Activated CD8-positive, alpha-beta T cell treated with anti-CD3 and anti-CD28 coated beads for 36 hours (primary cell): ENCODE measurements at regions of chr9 and their contacts with region 1.

Region 1: DNA sequence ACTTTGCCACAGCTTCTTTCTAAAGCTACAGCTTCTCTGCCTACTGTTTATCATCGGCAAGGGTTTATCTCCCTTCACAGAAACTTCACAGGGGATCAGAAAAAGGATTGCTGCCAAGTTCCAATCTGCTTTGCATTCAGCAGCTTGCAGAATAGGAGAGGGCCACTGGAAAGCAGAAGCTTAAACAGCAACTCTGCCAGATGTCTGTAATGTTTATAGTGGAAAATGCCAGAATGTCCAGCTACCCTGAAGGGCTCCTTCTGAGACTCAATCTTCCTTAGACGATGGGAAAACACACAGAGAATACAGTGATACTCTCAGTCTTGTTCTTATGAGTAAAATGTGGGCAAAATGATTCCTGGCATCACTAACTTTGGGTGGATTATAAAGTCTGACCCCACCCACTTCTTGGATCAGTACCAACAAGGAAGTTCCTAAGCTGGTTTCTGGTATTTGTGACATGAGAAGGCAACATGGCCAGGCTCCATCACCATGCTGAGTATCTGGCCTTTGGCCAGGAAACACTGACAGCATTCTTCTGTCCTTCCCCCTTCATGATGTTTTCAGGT is 19.0 kb downstream of the STOM start:
- DNase-seq: no peak
- ATAC-seq: no peak
- H3K4me3 Mint-ChIP-seq: no peak overlapping the region
- H3K27ac Mint-ChIP-seq: no peak overlapping the region
- H3K4me1 Mint-ChIP-seq: peaks cover 38% of the 10 kb centered on the region
- H3K27me3 Mint-ChIP-seq: no peaks in the 10 kb centered on the region
- CTCF ChIP-seq: no peak

Region 2: GRCh38 chr9:121233906-121234901 is 116.9 kb before region 1 on chr9:
- CTCF ChIA-PET with region 1: no interaction called
- POLR2A ChIA-PET with region 1: no interaction called
- intact Hi-C with region 1: no loop called
- DNase-seq: no peak
- ATAC-seq: no peak
- H3K4me3 Mint-ChIP-seq: no peak overlapping the region
- H3K27ac Mint-ChIP-seq: no peak overlapping the region
- H3K4me1 Mint-ChIP-seq: no peaks in the 10 kb centered on the region
- H3K27me3 Mint-ChIP-seq: no peaks in the 10 kb centered on the region
- CTCF ChIP-seq: no peak

Region 3: GRCh38 chr9:121289026-121289771 is 61.9 kb before region 1 on chr9:
- CTCF ChIA-PET with region 1: no interaction called
- POLR2A ChIA-PET with region 1: no interaction called
- intact Hi-C with region 1: no loop called
- DNase-seq: no peak
- ATAC-seq: no peak
- H3K4me3 Mint-ChIP-seq: no peak overlapping the region
- H3K27ac Mint-ChIP-seq: peak overlapping the region; percentile 34
- H3K4me1 Mint-ChIP-seq: peaks cover 29% of the 10 kb centered on the region
- H3K27me3 Mint-ChIP-seq: no peaks in the 10 kb centered on the region
- CTCF ChIP-seq: no peak

Region 4: DNA sequence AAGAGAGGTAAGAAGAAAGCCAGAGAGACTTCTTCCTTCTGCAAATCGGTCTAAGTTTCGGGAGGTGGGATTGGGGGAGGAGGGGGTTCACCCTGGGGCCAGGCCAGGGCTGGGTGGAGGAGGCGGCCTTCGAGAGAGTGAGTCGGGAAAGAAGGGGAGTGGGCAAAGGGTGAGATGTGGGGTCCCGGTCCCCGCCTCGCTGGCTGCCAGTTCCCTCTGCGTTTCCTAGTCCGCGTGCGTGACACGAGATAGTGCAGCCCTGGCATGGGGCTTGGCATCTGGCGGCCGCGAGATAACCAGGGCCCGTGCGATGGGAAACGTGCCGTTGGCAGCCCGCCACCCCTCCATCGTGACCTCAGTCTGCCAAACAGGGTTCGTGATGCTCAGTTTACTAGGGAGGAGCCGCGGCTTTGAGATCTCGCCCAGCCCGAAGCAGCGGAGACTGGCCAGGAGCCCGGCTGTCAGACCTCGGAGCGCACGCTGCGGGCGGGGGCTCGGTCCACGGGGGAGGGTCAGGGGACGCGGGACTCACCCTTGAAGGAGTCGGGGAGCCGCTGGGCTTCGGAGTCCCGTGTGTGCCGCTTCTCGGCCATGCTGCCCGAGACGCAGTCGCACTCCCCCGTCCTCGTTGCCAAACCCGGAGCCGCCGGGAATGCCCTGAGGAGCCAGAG is 18.7 kb after region 1 on chr9 and contains the start of gene STOM:
- CTCF ChIA-PET with region 1: interaction called, 4 read pairs
- POLR2A ChIA-PET with region 1: interaction called, 4 read pairs
- intact Hi-C with region 1: loop called (anchors 2 kb)
- DNase-seq: peak; percentile 79
- ATAC-seq: peak; percentile 65
- H3K4me3 Mint-ChIP-seq: peak within 1 kb of the TSS; percentile 79
- H3K27ac Mint-ChIP-seq: peak within 1 kb of the TSS; percentile 91
- H3K4me1 Mint-ChIP-seq: peaks cover 57% of the 10 kb centered on the region
- H3K27me3 Mint-ChIP-seq: no peaks in the 10 kb centered on the region
- CTCF ChIP-seq: no peak
- total RNA-seq, gene STOM: 31.7 to 32.5 TPM